GM18951 (cell line): ENCODE measurements at regions of chr6 and their contacts with region 1.

Region 1: DNA sequence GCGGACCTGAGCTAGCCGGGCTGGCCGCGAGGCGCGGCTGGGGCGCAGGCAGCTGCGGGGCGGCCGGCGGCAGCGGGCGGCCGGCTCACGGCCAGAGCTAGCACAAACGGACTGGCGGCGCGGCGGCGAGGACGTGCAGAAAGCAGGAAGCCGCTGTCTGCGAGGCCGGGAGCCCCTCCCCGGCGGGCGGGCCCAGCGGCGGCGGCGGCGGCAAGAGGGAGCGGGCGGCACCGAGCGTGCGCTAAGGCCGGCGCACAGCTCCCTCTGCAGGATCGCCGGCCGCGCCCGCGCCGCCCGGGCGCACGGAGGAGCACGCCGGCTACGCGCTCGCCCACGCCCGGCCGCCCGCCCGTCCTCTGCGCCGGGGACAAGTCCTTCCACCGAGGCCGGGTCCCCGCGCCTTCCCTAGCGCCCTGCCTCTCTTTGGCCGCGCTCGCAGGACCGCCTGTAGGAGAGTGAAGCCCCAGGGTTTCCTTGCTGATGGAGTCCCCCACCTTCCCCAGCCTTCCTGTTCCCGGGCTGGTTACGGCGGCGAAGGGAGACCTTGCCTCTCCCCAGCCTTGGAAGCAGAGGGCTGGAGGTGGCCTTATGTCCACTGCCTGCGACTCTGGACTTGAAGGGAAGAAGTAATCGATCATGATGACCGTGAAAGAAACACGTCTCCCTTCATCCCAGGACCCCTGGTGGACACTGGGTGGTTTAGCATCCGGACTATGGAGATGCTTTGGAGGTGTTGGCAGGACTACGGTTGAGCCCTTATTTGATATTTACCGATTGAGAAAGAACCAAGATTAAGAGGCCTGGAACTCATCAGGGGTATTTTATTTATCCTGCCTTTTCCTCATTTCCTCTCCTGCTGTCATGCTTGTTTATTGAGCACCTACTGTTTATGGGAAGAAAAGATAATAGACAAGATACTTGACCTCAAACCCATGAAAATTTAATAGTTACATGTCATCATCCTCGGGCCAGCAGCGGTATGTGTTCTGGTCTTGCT is at the start of gene PREP:
- POLR2A ChIP-seq: peak; percentile 84

Region 2: DNA sequence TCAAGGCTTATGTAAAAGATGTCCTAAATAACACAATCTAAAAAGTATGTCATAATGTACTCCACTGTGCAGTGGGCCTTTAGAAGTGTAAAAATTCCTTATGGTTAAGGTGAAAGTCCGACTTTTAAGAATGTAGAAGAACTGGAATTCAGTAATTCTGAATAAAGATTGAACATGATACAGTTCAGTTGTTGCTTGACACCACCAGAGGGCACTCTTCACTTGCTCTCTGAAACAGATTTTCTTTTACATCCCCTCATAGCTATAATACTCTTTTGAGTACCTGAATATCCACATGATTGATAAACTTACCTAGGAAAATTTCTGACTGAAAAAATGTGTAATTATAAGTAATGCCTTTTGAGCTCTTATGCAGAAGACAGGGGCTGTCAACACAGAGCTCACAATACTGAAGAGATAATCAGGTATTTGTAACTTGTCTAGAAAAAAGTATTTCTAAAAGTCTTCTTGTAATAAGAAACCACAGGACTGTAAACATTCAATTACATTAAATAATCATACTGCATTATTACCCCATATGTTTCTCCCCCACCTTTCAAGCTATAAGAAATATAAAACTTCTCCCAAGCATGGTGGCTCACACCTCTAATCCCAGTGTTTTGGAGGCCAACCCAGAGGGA is 315.5 kb before region 1 on chr6:
- in situ Hi-C with region 1: loop called (anchors 10 kb)
- POLR2A ChIP-seq: no peak